Activated naive CD4-positive, alpha-beta T cell treated with anti-CD3 and anti-CD28 coated beads for 36 hours (primary cell): ENCODE measurements at regions of chr17 and their contacts with region 1.

Region 1: GRCh38 chr17:37047631-37048104 is 98.9 kb downstream of the AATF start:
- DNase-seq: peak; percentile 92
- H3K4me3 Mint-ChIP-seq: no peak overlapping the region
- H3K27ac Mint-ChIP-seq: no peak overlapping the region
- H3K4me1 Mint-ChIP-seq: peaks cover 12% of the 10 kb centered on the region
- H3K27me3 Mint-ChIP-seq: no peaks in the 10 kb centered on the region

Region 2: DNA sequence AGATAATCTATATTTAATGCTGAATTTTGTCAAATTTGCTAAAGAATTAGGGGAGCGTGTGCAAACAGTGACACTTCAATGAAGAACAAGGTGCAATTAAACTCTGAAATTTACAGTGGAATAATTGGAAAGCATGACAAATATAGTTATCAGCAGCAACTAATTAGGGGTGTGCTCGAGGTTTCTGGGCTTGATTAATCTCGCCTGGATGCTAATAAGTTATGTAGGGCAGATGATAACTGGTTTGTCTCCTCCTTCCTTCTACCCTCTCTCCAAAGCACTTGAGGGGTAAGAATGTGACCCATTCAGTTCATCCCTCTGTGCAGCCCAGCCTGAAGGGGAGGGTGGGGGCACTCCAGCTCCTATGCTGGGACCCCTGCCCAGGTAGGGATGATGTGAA is 424.4 kb before region 1 on chr17:
- CTCF ChIA-PET with region 1: interaction called, 23 read pairs
- intact Hi-C with region 1: no loop called
- DNase-seq: no peak
- H3K4me3 Mint-ChIP-seq: no peak overlapping the region
- H3K27ac Mint-ChIP-seq: no peak overlapping the region
- H3K4me1 Mint-ChIP-seq: no peaks in the 10 kb centered on the region
- H3K27me3 Mint-ChIP-seq: no peaks in the 10 kb centered on the region

Region 3: DNA sequence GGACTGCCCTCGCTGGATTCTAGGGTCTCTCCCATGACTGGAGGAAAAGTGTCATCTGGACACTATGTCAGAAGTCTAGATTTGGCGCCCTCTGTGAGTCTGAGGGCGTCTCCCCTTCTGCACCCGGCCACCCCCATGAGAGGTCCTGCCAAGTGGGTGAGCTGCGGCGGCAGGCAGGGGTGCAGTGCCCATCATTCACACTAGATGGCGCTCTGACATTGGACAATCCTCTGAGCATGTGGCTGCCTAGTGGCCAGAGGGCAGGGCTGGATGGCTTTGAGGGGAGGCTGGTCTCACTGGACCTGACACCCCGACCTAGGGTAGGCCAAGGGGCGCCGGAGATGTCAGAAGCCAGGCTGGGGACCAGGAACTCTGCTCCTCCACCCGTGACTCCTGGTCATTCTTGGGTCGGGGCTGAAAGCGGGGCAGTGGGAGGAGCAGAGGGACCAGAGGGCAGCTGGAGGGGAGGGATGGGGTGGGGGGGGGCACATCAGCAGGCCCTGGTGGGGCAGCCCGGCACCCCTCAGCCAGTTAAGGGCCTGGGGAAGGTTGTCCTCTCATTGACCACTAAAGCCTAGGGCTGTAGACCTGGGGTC is 418.3 kb before region 1 on chr17:
- CTCF ChIA-PET with region 1: interaction called, 23 read pairs
- intact Hi-C with region 1: loop called (anchors 1 kb)
- DNase-seq: peak; percentile 87
- H3K4me3 Mint-ChIP-seq: no peak overlapping the region
- H3K27ac Mint-ChIP-seq: no peak overlapping the region
- H3K4me1 Mint-ChIP-seq: no peaks in the 10 kb centered on the region
- H3K27me3 Mint-ChIP-seq: no peaks in the 10 kb centered on the region

Region 4: GRCh38 chr17:36761203-36761950 is 286.3 kb before region 1 on chr17:
- CTCF ChIA-PET with region 1: interaction called, 5 read pairs
- intact Hi-C with region 1: loop called (anchors 5 kb)
- DNase-seq: no peak
- H3K4me3 Mint-ChIP-seq: no peak overlapping the region
- H3K27ac Mint-ChIP-seq: no peak overlapping the region
- H3K4me1 Mint-ChIP-seq: peaks cover 12% of the 10 kb centered on the region
- H3K27me3 Mint-ChIP-seq: no peaks in the 10 kb centered on the region

Region 5: DNA sequence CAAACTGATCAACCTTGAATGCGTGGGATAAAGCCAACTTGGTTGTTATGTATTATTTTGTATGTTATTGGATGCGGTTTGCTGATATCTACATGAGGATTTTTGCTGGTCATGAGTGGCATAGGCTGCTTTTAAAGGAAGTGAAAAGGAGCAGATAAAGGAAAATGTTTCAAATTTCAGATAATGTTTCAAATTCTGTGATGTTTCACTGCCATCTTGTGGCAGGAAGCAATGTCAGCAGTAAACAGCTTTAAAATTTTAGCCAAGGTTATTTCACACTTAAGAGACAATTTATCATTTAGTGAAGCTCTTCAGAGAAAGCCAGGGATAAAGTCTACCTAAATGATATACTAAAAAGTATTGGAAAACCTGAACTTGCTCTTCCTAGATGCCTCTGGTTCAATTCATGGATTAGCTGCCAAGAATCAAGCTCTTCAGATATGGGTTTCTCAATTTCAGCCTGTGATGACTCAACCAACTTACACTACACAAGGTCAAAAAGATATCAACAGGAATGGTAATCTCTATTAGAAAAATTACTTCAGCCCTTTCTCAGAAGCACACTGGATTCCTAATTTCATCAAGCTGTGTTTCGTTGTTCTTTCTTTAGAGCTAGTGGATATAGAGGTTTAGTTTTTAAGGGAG is 192.1 kb after region 1 on chr17:
- CTCF ChIA-PET with region 1: no interaction called
- intact Hi-C with region 1: loop called (anchors 10 kb)
- DNase-seq: no peak
- H3K4me3 Mint-ChIP-seq: no peak overlapping the region
- H3K27ac Mint-ChIP-seq: no peak overlapping the region
- H3K4me1 Mint-ChIP-seq: no peaks in the 10 kb centered on the region
- H3K27me3 Mint-ChIP-seq: no peaks in the 10 kb centered on the region